ENCODE measurements at regions of chr12 and their contacts with region 1.

Region 1: DNA sequence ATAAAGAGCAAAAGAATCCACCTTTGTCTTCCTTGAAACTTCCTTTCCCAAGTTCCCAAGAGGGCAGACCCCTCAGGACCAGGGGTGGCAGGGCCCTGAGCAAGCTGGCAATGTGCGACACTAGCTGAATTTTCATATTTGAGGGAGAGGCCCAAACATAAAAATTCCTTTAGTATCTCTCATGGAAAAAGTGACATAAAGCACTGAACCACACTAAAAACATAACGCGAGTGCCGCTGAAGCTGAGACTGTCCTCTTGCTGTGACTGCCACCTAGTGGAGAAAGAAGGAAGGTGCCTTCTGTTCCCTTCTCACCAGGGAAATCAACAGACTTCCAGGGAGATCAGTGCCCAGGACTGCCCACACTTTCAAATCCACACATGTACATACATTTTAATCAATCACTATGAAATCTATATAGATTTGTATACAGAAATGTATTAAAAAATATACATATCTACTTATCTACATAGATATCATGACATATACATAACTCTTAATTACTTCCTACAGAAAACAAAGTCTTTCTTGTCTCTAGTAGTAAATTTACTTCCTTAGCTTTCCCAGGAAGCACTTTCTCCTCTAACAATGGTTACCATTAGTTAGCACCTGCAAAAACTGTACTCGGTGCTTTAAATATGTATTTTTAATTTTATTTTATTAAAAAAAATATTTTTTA is 53.8 kb downstream of the SSH1 start:
- DNase-seq: peak in 1 of 2 experiments; percentile 76
- H3K4me3 ChIP-seq: peak overlapping the region in 1 of 4 experiments; percentile 43; a peak in 1 of 8 replicates
- H3K27ac ChIP-seq: no peak overlapping the region
- H3K4me1 ChIP-seq: peaks cover 2 to 13% (median 8%) of the 10 kb centered on the region in 4 experiments; a peak in 5 of 7 replicates
- H3K27me3 ChIP-seq: no peaks in the 10 kb centered on the region
- CTCF ChIP-seq: peak; percentile 75 to 95 (median 80)
- EP300 ChIP-seq: no peak
- POLR2A ChIP-seq: no peak
- RAD21 ChIP-seq: peak; percentile 96

Region 2: DNA sequence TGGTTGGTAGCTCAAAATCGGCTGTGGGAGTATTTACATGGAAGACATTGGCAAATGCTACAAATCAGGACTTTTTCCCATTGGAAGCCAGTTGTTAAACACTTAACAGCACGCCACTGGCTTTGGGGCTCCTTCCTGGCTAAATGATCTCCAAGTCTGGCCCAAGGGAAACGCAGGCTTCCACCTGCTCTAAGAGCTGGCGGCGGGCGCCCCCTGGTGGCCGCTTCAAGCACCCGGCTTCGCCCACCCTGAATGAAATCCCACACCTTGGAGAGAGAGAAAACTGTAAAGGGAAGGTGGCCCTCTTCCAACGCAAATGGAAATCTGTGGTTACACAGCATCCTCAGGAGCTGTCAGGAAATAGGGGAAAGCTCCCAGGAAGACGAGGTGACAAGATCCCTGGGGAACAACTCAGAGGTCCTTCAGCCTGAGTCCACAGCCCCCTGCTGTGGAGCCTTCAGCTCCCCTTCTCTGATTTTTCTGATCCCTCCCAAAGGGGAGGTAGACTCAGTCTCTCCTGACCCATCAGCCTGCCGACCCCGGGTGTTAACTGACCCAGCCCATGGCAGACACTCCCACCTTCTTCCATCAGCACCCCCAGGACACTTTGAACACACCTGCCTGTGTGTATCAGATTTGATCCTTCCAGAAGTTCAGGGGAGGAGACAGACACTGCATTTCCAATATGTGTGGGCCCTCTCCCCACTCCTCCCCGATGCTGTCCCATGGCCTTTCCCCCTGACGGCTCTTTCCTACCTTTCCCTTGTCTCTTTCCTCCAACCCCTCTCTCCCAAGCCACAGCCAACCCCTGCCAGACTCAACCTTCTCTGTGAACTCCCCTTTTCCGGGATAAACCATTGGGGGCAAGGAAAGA is 185.3 kb before region 1 on chr12:
- CTCF ChIA-PET with region 1: interaction called, 12 read pairs
- POLR2A ChIA-PET with region 1: no interaction called
- DNase-seq: peak; percentile 70 to 95
- H3K4me3 ChIP-seq: no peak overlapping the region
- H3K27ac ChIP-seq: no peak overlapping the region
- H3K4me1 ChIP-seq: peaks cover 0 to 5% (median 4%) of the 10 kb centered on the region in 4 experiments; a peak in 4 of 7 replicates
- H3K27me3 ChIP-seq: no peaks in the 10 kb centered on the region
- CTCF ChIP-seq: peak; percentile 78 to 93 (median 89)
- EP300 ChIP-seq: no peak
- POLR2A ChIP-seq: no peak
- RAD21 ChIP-seq: peak; percentile 98 to 99

Region 3: DNA sequence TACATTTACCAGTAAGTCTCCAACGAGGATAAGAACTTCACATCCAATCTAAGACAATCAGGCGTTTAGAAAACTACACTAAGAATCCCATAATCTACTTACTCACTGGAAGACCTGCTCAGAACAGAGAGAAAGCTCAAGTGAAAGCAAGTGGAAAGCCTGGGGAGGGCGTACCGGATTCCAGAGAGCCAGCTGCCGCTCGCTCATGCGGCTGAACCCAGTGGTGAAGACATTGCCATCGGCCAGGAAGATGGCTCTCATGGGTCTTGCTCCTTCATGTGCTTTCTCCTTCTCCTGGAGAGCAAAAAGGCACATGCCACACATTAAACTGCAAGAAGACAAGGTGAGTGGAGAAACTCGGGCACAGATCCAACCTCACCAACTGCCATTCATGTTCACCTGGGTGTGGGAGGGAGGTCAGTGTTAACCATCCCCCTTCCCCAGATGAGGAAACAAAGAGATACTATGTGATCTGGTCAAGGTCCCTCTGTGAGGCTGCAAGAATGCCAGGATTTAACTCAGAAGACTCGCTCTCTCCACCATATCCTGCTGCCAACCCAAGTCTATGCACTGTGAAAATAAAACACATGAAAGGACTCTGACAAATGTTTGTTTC is 146.3 kb before region 1 on chr12:
- CTCF ChIA-PET with region 1: interaction called, 188 read pairs
- POLR2A ChIA-PET with region 1: interaction called, 4 read pairs
- DNase-seq: no peak
- H3K4me3 ChIP-seq: no peak overlapping the region
- H3K27ac ChIP-seq: no peak overlapping the region
- H3K4me1 ChIP-seq: peaks cover 3 to 12% (median 7%) of the 10 kb centered on the region in 4 experiments; a peak in 6 of 7 replicates
- H3K27me3 ChIP-seq: no peaks in the 10 kb centered on the region
- CTCF ChIP-seq: no peak
- EP300 ChIP-seq: no peak
- POLR2A ChIP-seq: no peak
- RAD21 ChIP-seq: no peak

Region 4: GRCh38 chr12:108768591-108769500 is 34.7 kb before region 1 on chr12:
- CTCF ChIA-PET with region 1: interaction called, 52 read pairs
- POLR2A ChIA-PET with region 1: interaction called, 4 read pairs
- DNase-seq: peak; percentile 49 to 83
- H3K4me3 ChIP-seq: peak overlapping the region; percentile 32 to 61 (median 50)
- H3K27ac ChIP-seq: no peak overlapping the region
- H3K4me1 ChIP-seq: peaks cover 0 to 13% (median 2%) of the 10 kb centered on the region in 4 experiments; a peak in 4 of 7 replicates
- H3K27me3 ChIP-seq: no peaks in the 10 kb centered on the region
- CTCF ChIP-seq: no peak
- EP300 ChIP-seq: no peak
- POLR2A ChIP-seq: no peak
- RAD21 ChIP-seq: peak in 1 of 2 experiments; percentile 1; a peak in 1 of 4 replicates

Region 5: DNA sequence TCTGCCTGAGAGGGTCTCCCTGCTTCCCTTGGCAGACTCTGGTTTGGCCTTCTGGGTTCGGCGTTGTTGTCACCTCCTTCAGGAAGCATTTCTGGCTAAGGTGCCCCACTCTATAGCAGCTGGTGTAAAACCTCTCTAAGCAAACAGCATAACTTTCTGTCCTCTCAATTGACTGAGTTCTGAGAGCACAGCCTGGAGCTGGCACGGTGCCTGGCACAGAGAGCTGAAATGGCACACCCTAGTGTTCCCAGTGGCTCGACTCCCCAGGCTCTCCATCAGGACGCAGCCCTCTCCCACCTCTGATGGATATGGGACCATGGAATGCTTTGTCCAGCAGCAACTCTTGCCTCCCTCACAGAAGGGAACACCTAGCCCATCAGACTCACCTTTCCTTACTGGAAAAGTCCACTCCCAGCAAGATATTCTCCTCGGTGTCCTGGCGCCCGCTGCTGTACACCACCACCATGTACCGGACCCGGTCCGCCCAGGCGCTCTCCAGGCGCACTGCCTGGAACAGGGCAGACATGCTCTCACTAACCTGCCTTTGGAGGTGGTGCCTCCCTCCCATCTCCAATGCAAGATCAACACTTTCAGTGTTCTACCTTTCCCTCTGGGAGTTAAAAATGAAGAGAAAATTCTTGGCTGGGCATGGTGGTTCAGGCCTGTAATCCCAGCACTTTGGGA is 13.2 kb after region 1 on chr12:
- CTCF ChIA-PET with region 1: interaction called, 16 read pairs
- POLR2A ChIA-PET with region 1: interaction called, 3 read pairs
- DNase-seq: no peak
- H3K4me3 ChIP-seq: no peak overlapping the region
- H3K27ac ChIP-seq: no peak overlapping the region
- H3K4me1 ChIP-seq: peaks cover 0 to 6% (median 3%) of the 10 kb centered on the region in 4 experiments; a peak in 3 of 7 replicates
- H3K27me3 ChIP-seq: no peaks in the 10 kb centered on the region
- CTCF ChIP-seq: no peak
- EP300 ChIP-seq: no peak
- POLR2A ChIP-seq: no peak
- RAD21 ChIP-seq: no peak

Region 6: GRCh38 chr12:108950991-108951739 is 147.6 kb after region 1 on chr12:
- CTCF ChIA-PET with region 1: interaction called, 20 read pairs
- POLR2A ChIA-PET with region 1: no interaction called
- DNase-seq: peak; percentile 17 to 81
- H3K4me3 ChIP-seq: no peak overlapping the region
- H3K27ac ChIP-seq: no peak overlapping the region
- H3K4me1 ChIP-seq: no peaks in the 10 kb centered on the region
- H3K27me3 ChIP-seq: no peaks in the 10 kb centered on the region
- CTCF ChIP-seq: peak; percentile 78 to 85 (median 83)
- EP300 ChIP-seq: no peak
- POLR2A ChIP-seq: no peak
- RAD21 ChIP-seq: peak; percentile 91 to 96